Naive thymus-derived CD8-positive, alpha-beta T cell (primary cell): ENCODE measurements at regions of chr14 and their contacts with region 1.

Region 1: GRCh38 chr14:91872517-91873470 is 5.5 kb upstream of the TC2N start:
- DNase-seq: peak; percentile 41 to 82 (median 69)
- ATAC-seq: peak; percentile 48 to 56
- H3K4me3 Mint-ChIP-seq: peak overlapping the region; percentile 78 to 92 (median 84)
- H3K27ac Mint-ChIP-seq: peak overlapping the region; percentile 95 to 100 (median 98)
- H3K4me1 Mint-ChIP-seq: peaks cover 56 to 99% (median 98%) of the 10 kb centered on the region in 4 donors
- H3K27me3 Mint-ChIP-seq: no peaks in the 10 kb centered on the region

Region 2: GRCh38 chr14:91836119-91836881 is 36.5 kb before region 1 on chr14:
- POLR2A ChIA-PET with region 1: interaction called, 55 read pairs
- DNase-seq: peak; percentile 74 to 98 (median 86)
- ATAC-seq: peak; percentile 77 to 89
- H3K4me3 Mint-ChIP-seq: peak overlapping the region; percentile 78 to 94 (median 90)
- H3K27ac Mint-ChIP-seq: peak overlapping the region; percentile 74 to 96 (median 92)
- H3K4me1 Mint-ChIP-seq: peaks cover 28 to 81% (median 74%) of the 10 kb centered on the region in 4 donors
- H3K27me3 Mint-ChIP-seq: no peaks in the 10 kb centered on the region

Region 3: DNA sequence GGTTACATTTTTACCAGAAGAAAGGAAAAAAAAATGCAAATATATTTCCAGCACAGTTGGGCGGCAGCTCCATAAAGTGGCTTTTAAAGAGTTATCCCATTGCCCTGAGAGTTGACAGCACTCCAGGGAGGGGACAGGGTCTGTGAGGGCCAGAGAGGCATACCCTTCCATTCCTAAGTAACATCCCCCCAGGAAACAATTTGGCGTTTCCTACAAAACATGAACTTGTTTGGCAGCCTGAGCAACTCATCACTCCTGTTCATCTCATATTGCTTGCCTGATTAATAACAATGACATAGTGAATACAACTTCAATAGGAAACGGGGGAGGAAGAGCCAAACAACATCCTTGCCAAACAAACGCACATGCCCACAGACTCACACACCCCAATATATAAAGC is 28.8 kb before region 1 on chr14:
- POLR2A ChIA-PET with region 1: interaction called, 18 read pairs
- DNase-seq: no peak
- ATAC-seq: no peak
- H3K4me3 Mint-ChIP-seq: no peak overlapping the region
- H3K27ac Mint-ChIP-seq: peak overlapping the region in 4 of 10 donors; percentile 2 to 56 (median 51)
- H3K4me1 Mint-ChIP-seq: peaks cover 27 to 87% (median 72%) of the 10 kb centered on the region in 4 donors
- H3K27me3 Mint-ChIP-seq: no peaks in the 10 kb centered on the region

Region 4: DNA sequence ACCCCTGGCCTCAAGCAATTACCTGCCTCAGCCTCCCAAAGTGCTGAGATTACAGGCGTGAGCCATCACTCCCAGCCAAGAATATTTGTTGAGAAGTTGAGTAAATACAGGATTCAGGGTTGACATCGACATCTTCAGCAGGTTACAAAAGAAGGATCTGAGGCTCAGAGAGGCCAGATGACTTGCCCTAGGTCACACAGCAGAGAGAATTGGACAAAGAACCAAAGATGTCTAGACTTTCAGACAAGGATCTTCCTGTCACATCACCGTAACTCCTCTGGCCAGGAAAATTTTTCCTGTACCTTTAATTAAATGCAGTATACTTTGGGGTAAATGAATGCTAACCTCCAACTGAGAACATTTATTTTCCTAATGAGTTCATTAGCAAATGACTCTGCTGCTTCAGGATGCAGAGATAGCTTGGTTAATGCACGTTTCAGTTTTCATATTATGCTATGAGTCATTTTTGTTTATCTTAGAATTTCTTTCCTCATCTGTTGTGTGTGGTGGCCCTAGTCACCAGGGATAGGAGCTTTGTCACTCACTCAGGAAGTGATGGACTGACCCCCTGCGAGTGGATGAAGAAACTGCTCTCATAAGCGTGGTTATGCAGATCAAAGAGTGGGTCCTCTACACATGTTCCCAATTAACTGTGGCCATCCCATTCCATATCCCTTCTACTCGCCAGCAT is 14.4 kb before region 1 on chr14:
- POLR2A ChIA-PET with region 1: interaction called, 150 read pairs
- DNase-seq: no peak
- ATAC-seq: no peak
- H3K4me3 Mint-ChIP-seq: peak overlapping the region in 9 of 10 donors; percentile 27 to 82 (median 48)
- H3K27ac Mint-ChIP-seq: peak overlapping the region in 9 of 10 donors; percentile 20 to 98 (median 91)
- H3K4me1 Mint-ChIP-seq: peaks cover 52 to 92% (median 91%) of the 10 kb centered on the region in 4 donors
- H3K27me3 Mint-ChIP-seq: no peaks in the 10 kb centered on the region

Region 5: DNA sequence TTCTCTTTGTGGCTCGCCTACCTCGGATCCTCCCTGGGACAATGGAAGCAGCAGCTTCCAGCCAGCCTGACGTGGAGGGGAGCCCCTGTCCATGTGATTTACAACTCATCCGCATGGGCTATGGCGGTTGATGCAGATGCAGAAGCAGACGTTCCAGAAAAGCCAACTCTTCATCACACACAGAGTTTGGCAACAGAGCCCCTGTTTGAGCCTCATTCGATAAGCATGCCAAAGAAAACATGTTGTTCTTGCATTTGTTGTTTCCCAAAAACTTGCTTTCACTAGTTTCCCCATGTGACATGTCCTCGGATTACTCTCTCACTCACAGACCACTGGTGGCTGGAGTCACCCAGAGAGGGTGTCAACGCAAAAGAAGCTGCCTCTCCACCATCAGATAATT is 11.0 kb after region 1 on chr14:
- POLR2A ChIA-PET with region 1: interaction called, 317 read pairs
- DNase-seq: peak in 1 of 10 donors; percentile 13
- ATAC-seq: no peak
- H3K4me3 Mint-ChIP-seq: peak overlapping the region in 1 of 10 donors; percentile 45
- H3K27ac Mint-ChIP-seq: peak overlapping the region in 5 of 10 donors; percentile 14 to 84 (median 57)
- H3K4me1 Mint-ChIP-seq: peaks cover 24 to 58% (median 45%) of the 10 kb centered on the region in 4 donors
- H3K27me3 Mint-ChIP-seq: no peaks in the 10 kb centered on the region

Region 6: DNA sequence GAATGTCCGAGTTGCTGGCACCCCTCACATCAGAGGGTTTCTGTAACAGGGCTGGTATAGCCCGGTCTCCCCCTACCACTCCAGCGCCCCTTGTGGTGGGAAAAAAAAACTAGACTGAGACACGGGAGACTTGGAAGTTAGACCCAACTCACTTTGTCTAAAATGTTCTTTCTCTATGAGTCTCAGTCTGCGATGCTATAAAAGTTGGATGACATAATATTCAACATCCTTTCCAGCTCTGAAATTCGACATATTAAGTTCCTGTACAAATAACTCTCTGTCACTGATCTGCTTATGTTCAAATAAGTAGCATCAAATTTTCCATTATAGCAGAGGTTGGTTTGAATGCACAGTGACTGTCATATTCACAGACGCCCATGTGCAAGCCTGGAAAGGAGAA is 20.2 kb after region 1 on chr14:
- POLR2A ChIA-PET with region 1: interaction called, 317 read pairs
- DNase-seq: peak in 1 of 10 donors; percentile 23
- ATAC-seq: no peak
- H3K4me3 Mint-ChIP-seq: peak overlapping the region in 1 of 10 donors; percentile 8
- H3K27ac Mint-ChIP-seq: peak overlapping the region; percentile 23 to 95 (median 74)
- H3K4me1 Mint-ChIP-seq: peaks cover 38 to 79% (median 61%) of the 10 kb centered on the region in 4 donors
- H3K27me3 Mint-ChIP-seq: no peaks in the 10 kb centered on the region

Region 7: GRCh38 chr14:91911474-91912032 is 38.8 kb after region 1 on chr14:
- POLR2A ChIA-PET with region 1: interaction called, 15 read pairs
- DNase-seq: peak; percentile 12 to 73 (median 48)
- ATAC-seq: peak; percentile 90 to 92
- H3K4me3 Mint-ChIP-seq: peak overlapping the region in 7 of 10 donors; percentile 1 to 51 (median 39)
- H3K27ac Mint-ChIP-seq: peak overlapping the region; percentile 22 to 87 (median 72)
- H3K4me1 Mint-ChIP-seq: peaks cover 11 to 33% (median 23%) of the 10 kb centered on the region in 4 donors
- H3K27me3 Mint-ChIP-seq: no peaks in the 10 kb centered on the region